Activated B cell treated with CpG ODN at 0.5 μM for 24 hours (primary cell): ENCODE measurements at regions of chr10 and their contacts with region 1.

Region 1: DNA sequence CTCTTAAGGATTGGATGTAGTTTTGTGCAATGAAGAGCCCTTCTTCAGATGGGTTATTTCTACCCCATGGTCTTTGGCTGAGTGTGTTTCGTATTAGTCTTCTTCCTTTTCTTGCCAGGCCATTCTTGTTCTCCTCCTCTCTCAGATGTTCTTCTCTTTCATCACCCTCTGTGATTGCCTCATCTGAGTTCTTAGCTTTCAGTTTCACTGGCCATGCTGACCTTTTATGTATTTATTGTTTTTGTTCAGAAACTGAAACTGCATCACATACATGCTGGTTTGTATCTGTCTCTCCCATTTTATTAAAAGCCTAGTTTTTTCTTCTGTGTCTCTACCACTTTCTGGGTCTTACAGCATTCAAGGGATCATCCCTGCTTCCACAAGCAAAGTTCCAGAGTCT is 21.7 kb upstream of the PCGF5 start:
- DNase-seq: no peak
- ATAC-seq: peak; percentile 23
- H3K4me3 Mint-ChIP-seq: peak overlapping the region; percentile 11
- H3K27ac Mint-ChIP-seq: peak overlapping the region; percentile 86
- H3K4me1 Mint-ChIP-seq: peaks cover 88% of the 10 kb centered on the region
- H3K27me3 Mint-ChIP-seq: no peaks in the 10 kb centered on the region
- CTCF ChIP-seq: no peak

Region 2: GRCh38 chr10:91185239-91185875 is 13.4 kb before region 1 on chr10:
- CTCF ChIA-PET with region 1: no interaction called
- POLR2A ChIA-PET with region 1: no interaction called
- intact Hi-C with region 1: loop called (anchors 1 kb)
- DNase-seq: no peak
- ATAC-seq: no peak
- H3K4me3 Mint-ChIP-seq: no peak overlapping the region
- H3K27ac Mint-ChIP-seq: no peak overlapping the region
- H3K4me1 Mint-ChIP-seq: peaks cover 80% of the 10 kb centered on the region
- H3K27me3 Mint-ChIP-seq: no peaks in the 10 kb centered on the region
- CTCF ChIP-seq: no peak

Region 3: GRCh38 chr10:91210435-91210834 is 11.7 kb after region 1 on chr10:
- CTCF ChIA-PET with region 1: no interaction called
- POLR2A ChIA-PET with region 1: interaction called, 8 read pairs
- intact Hi-C with region 1: loop called (anchors 1 kb)
- DNase-seq: no peak
- ATAC-seq: peak; percentile 70
- H3K4me3 Mint-ChIP-seq: peak overlapping the region; percentile 44
- H3K27ac Mint-ChIP-seq: peak overlapping the region; percentile 77
- H3K4me1 Mint-ChIP-seq: peaks cover 79% of the 10 kb centered on the region
- H3K27me3 Mint-ChIP-seq: no peaks in the 10 kb centered on the region
- CTCF ChIP-seq: no peak